Posterior vena cava (tissue), 2 donors: ENCODE measurements at regions of chr5 and their contacts with region 1.

Region 1: GRCh38 chr5:28903643-28904042 is 1865.3 kb upstream of the CDH9 start:
- DNase-seq: no peak

Region 2: DNA sequence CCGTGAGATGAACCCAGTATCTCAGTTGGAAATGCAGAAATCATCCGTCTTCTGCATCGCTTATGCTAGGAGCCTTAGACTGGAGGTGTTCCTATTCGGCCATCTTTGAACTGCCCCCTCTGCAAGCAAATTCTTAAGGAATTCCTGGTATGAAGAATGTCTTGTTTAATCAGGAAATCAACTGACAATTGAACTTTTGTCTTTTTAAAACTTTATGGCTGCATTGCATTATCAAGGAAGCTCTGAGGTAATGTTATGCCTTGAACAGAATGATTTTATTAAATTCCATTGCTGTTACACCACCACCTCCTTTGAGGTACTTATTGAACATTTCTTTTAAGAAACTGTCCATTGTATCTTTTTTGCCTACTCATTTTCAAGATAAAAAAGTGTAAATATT is 50.4 kb after region 1 on chr5:
- intact Hi-C with region 1: loop called in 1 of 2 experiments (anchors 2 kb)
- DNase-seq: no peak